IMR-90 (cell line): ENCODE measurements at regions of chr12 and their contacts with region 1.

Region 1: DNA sequence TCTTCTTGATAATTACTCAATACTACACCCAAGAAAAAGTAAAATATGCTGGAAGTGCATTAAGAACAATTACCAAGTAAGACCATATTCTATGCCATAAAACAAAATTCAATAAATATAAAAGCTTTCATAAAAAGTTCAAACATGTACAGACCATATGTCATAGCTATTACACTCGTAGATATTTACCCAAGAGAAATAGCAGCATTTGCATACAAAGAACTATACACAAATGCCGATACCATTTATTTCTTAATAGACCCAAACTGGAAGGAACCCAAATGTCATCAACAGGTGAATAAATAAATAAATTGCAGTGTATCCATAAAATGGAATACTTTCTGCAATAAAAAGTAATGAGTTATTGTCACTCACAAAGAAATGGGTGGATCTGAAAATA is 78.3 kb upstream of the SLC16A7 start:
- DNase-seq: no peak
- ATAC-seq: no peak
- H3K4me3 ChIP-seq: no peak overlapping the region
- H3K27ac ChIP-seq: no peak overlapping the region
- H3K4me1 ChIP-seq: no peaks in the 10 kb centered on the region
- H3K27me3 ChIP-seq: no peaks in the 10 kb centered on the region
- CTCF ChIP-seq: no peak
- POLR2A ChIP-seq: no peak
- RAD21 ChIP-seq: no peak

Region 2: GRCh38 chr12:59559696-59560095 is 42.2 kb after region 1 on chr12:
- CTCF ChIA-PET with region 1: no interaction called
- POLR2A ChIA-PET with region 1: no interaction called
- dilution Hi-C with region 1: no loop called
- in situ Hi-C with region 1: no loop called
- intact Hi-C with region 1: loop called (anchors 5 kb)
- DNase-seq: no peak
- ATAC-seq: no peak
- H3K4me3 ChIP-seq: no peak overlapping the region
- H3K27ac ChIP-seq: no peak overlapping the region
- H3K4me1 ChIP-seq: no peaks in the 10 kb centered on the region
- H3K27me3 ChIP-seq: no peaks in the 10 kb centered on the region
- CTCF ChIP-seq: no peak
- POLR2A ChIP-seq: no peak
- RAD21 ChIP-seq: no peak